Gastrocnemius medialis (tissue), 4 donors: ENCODE measurements at regions of chr5 and their contacts with region 1.

Region 1: GRCh38 chr5:74464512-74465209 is 175.9 kb downstream of the ENC1 start:
- DNase-seq: no peak
- ATAC-seq: peak in 1 of 2 donors; percentile 86
- H3K4me3 ChIP-seq: no peak overlapping the region
- H3K27ac ChIP-seq: no peak overlapping the region
- H3K4me1 ChIP-seq: peaks cover 11 to 14% of the 10 kb centered on the region in 2 donors
- H3K27me3 ChIP-seq: no peaks in the 10 kb centered on the region
- CTCF ChIP-seq: no peak
- POLR2A ChIP-seq: no peak

Region 2: DNA sequence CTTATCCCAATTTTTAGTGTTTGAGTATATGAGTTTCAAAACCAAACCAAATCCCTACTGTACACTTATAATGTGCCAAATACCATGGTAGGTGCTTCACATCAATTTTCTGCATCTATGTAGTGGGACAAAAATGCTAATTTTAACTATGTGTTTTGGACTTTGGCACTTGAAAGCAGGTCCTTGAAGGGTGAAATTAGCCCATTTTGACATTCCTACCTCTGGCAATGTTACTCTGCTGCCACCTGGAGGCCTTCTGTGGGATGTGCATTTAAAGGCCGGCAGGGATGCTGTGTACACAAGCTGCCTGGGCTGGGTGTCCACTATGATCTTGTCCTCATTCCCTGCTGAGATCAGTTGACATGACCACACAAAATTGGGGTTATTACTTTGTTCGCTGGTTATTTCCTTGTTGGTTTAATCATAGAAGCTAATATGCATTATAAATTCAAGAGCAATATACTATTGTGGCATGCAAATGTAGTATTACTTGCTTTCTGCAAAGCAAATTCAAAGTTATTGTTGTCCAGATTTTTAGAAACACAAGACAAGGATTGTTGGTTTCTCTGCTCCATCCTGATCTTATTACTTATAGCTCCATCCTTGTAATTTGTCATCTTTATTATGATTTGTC is 671.9 kb before region 1 on chr5:
- in situ Hi-C with region 1: no loop called
- intact Hi-C with region 1: no loop called
- DNase-seq: peak; percentile 12 to 47
- ATAC-seq: peak; percentile 71 to 75
- H3K4me3 ChIP-seq: no peak overlapping the region
- H3K27ac ChIP-seq: no peak overlapping the region
- H3K4me1 ChIP-seq: peaks cover 0 to 5% of the 10 kb centered on the region in 2 donors
- H3K27me3 ChIP-seq: no peaks in the 10 kb centered on the region
- CTCF ChIP-seq: peak; percentile 79 to 97 (median 93)
- POLR2A ChIP-seq: no peak

Region 3: GRCh38 chr5:74426506-74426905 is 38.2 kb before region 1 on chr5:
- in situ Hi-C with region 1: no loop called
- intact Hi-C with region 1: loop called (anchors 5 kb)
- DNase-seq: no peak
- ATAC-seq: no peak
- H3K4me3 ChIP-seq: no peak overlapping the region
- H3K27ac ChIP-seq: no peak overlapping the region
- H3K4me1 ChIP-seq: peaks cover 0 to 14% of the 10 kb centered on the region in 2 donors
- H3K27me3 ChIP-seq: no peaks in the 10 kb centered on the region
- CTCF ChIP-seq: no peak
- POLR2A ChIP-seq: no peak

Region 4: DNA sequence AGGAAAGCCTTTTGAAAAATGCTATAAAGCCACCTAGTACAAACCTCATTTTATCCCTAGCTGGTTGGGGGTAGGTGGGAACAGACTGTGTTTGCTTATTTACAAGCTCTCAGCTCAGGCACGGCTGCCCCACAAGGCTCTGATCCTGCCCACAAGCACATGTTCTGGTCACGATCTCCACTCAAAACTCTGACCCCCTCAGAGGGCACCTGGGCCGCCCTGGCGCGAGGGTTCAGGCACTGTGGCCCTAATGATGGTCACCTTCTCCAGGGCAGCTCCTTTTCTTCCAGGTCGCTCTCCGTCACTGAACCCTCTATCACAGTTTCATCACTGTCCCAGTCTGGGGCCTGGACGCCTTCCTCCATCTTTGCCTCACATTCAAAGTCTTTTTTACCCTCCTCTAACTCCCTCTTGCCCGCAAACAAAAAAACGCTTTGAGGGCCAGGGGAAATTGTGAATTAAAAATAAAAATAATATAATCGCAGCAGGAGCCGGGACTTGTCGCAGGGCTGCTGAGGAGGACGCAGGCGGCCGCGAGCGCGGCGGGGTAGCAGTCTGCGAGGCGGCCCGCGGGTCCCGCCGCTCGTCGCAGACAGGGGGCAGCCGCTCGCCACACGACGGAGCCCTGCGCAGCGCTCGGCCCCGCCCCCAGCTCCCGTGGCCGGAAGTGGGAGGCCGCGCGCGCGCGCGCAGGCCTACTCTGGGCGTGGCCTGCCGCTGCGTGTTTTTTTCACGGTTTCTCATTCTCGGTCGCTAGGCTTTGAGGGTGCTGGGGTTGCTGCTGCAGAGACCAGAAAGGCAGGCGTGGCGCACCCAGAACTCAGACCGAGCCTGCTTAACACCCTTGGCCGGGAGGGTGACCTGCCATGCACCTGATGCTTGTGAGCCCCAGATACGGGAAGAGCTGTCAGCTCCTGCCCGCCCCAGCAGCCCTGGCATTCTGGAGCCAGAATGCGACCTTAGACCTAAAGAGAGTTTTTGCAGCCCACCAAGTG is 772.0 kb after region 1 on chr5 and contains the start of gene ANKRD31:
- in situ Hi-C with region 1: no loop called
- intact Hi-C with region 1: no loop called
- DNase-seq: peak; percentile 39 to 57
- ATAC-seq: peak; percentile 90 to 91
- H3K4me3 ChIP-seq: peak within 1 kb of the TSS; percentile 55 to 83 (median 76)
- H3K27ac ChIP-seq: peak within 1 kb of the TSS; percentile 41 to 56 (median 51)
- H3K4me1 ChIP-seq: peaks cover 5 to 6% of the 10 kb centered on the region in 2 donors
- H3K27me3 ChIP-seq: no peaks in the 10 kb centered on the region
- CTCF ChIP-seq: peak; percentile 61 to 85 (median 80)
- POLR2A ChIP-seq: no peak
- total RNA-seq, gene ANKRD31: 0.03 TPM in 1 of 4 donors, not detected in the others